Panc1 (cell line): ENCODE measurements at regions of chr11 and their contacts with region 1.

Region 1: GRCh38 chr11:36258730-36259360 is 30.4 kb downstream of the COMMD9 start:
- DNase-seq: peak; percentile 27
- ATAC-seq: peak; percentile 94
- H3K4me3 ChIP-seq: no peak overlapping the region
- H3K27ac ChIP-seq: 0 out of 2 replicates have a peak overlapping the region, but pooled peaks have one; percentile 29
- H3K4me1 ChIP-seq: no peaks in the 10 kb centered on the region
- H3K27me3 ChIP-seq: no peaks in the 10 kb centered on the region
- CTCF ChIP-seq: peak; percentile 87

Region 2: GRCh38 chr11:34476853-34477252 is 1782.0 kb before region 1 on chr11:
- CTCF ChIA-PET with region 1: no interaction called
- POLR2A ChIA-PET with region 1: no interaction called
- in situ Hi-C with region 1: no loop called
- intact Hi-C with region 1: no loop called
- DNase-seq: no peak
- ATAC-seq: no peak
- H3K4me3 ChIP-seq: no peak overlapping the region
- H3K27ac ChIP-seq: no peak overlapping the region
- H3K4me1 ChIP-seq: no peaks in the 10 kb centered on the region
- H3K27me3 ChIP-seq: no peaks in the 10 kb centered on the region
- CTCF ChIP-seq: no peak

Region 3: GRCh38 chr11:36073411-36074203 is 185.2 kb before region 1 on chr11:
- CTCF ChIA-PET with region 1: no interaction called
- POLR2A ChIA-PET with region 1: no interaction called
- in situ Hi-C with region 1: no loop called
- intact Hi-C with region 1: no loop called
- DNase-seq: no peak
- ATAC-seq: no peak
- H3K4me3 ChIP-seq: no peak overlapping the region
- H3K27ac ChIP-seq: 0 out of 2 replicates have a peak overlapping the region, but pooled peaks have one; percentile 44
- H3K4me1 ChIP-seq: no peaks in the 10 kb centered on the region
- H3K27me3 ChIP-seq: no peaks in the 10 kb centered on the region
- CTCF ChIP-seq: no peak

Region 4: GRCh38 chr11:36149538-36150242 is 109.2 kb before region 1 on chr11:
- CTCF ChIA-PET with region 1: no interaction called
- POLR2A ChIA-PET with region 1: no interaction called
- in situ Hi-C with region 1: no loop called
- intact Hi-C with region 1: loop called (anchors 10 kb)
- DNase-seq: peak; percentile 97
- ATAC-seq: peak; percentile 98
- H3K4me3 ChIP-seq: no peak overlapping the region
- H3K27ac ChIP-seq: peak overlapping the region; percentile 80
- H3K4me1 ChIP-seq: peaks cover 23% of the 10 kb centered on the region
- H3K27me3 ChIP-seq: no peaks in the 10 kb centered on the region
- CTCF ChIP-seq: peak; percentile 82